CD4-positive, alpha-beta T cell (primary cell): ENCODE measurements at regions of chr5 and their contacts with region 1.

Region 1: DNA sequence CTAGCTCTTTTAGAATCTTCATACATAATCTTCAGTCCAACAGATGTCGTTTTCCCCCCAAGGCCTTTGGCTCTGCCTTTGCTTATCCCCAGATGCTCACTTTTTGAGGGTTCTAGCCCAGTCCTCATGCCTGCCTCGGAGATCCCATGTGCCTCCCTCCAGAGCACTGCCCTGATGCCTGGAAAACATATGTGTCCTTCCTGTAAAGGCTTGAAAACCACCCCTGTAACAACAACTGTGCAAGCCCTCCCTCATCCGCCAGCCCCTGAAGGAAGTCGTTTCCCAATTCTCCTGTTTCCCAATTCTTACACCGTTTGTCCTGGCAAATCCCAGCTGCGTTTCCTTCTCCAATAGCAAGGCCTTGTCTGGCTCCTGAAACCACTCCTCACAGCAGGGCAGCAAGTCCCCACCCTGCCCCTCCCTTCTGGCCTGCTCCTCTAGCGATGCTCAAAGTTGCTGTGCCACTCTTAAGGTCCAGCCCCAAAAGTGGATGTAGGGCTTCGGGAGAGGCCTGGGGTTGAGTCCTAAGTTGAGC is 52.2 kb downstream of the SLC36A1 start:
- DNase-seq: no peak
- ATAC-seq: no peak
- H3K4me3 ChIP-seq: no peak overlapping the region
- H3K4me3 Mint-ChIP-seq: no peak overlapping the region
- H3K27ac ChIP-seq: no peak overlapping the region
- H3K27ac Mint-ChIP-seq: no peak overlapping the region
- H3K4me1 ChIP-seq: peaks cover 6% of the 10 kb centered on the region
- H3K4me1 Mint-ChIP-seq: peaks cover 6% of the 10 kb centered on the region
- H3K27me3 ChIP-seq: no peaks in the 10 kb centered on the region
- H3K27me3 Mint-ChIP-seq: no peaks in the 10 kb centered on the region
- CTCF ChIP-seq: no peak

Region 2: GRCh38 chr5:151764801-151765200 is 265.2 kb after region 1 on chr5:
- CTCF ChIA-PET with region 1: no interaction called
- POLR2A ChIA-PET with region 1: no interaction called
- intact Hi-C with region 1: loop called in 1 of 2 experiments (anchors 5 kb)
- DNase-seq: no peak
- ATAC-seq: no peak
- H3K4me3 ChIP-seq: no peak overlapping the region
- H3K4me3 Mint-ChIP-seq: no peak overlapping the region
- H3K27ac ChIP-seq: no peak overlapping the region
- H3K27ac Mint-ChIP-seq: no peak overlapping the region
- H3K4me1 ChIP-seq: peaks cover 7% of the 10 kb centered on the region
- H3K4me1 Mint-ChIP-seq: peaks cover 6% of the 10 kb centered on the region
- H3K27me3 ChIP-seq: no peaks in the 10 kb centered on the region
- H3K27me3 Mint-ChIP-seq: no peaks in the 10 kb centered on the region
- CTCF ChIP-seq: no peak